CD8-positive, alpha-beta T cell (primary cell): ENCODE measurements at regions of chrX and their contacts with region 1.

Region 1: GRCh38 chrX:11533211-11533651 is 132.5 kb downstream of the ARHGAP6 start:
- DNase-seq: peak in 2 of 9 experiments; percentile 66 to 79
- ATAC-seq: peak; percentile 99
- H3K4me3 ChIP-seq: no peak overlapping the region
- H3K4me3 Mint-ChIP-seq: no peak overlapping the region
- H3K27ac ChIP-seq: no peak overlapping the region
- H3K27ac Mint-ChIP-seq: no peak overlapping the region
- H3K4me1 ChIP-seq: no peaks in the 10 kb centered on the region
- H3K4me1 Mint-ChIP-seq: no peaks in the 10 kb centered on the region
- H3K27me3 ChIP-seq: no peaks in the 10 kb centered on the region
- H3K27me3 Mint-ChIP-seq: no peaks in the 10 kb centered on the region
- CTCF ChIP-seq: peak; percentile 90

Region 2: GRCh38 chrX:9995855-9996339 is 1537.3 kb before region 1 on chrX:
- CTCF ChIA-PET with region 1: no interaction called
- POLR2A ChIA-PET with region 1: no interaction called
- intact Hi-C with region 1: loop called in 1 of 2 experiments (anchors 10 kb)
- DNase-seq: peak; percentile 35 to 87 (median 77)
- ATAC-seq: peak; percentile 84
- H3K4me3 ChIP-seq: no peak overlapping the region
- H3K4me3 Mint-ChIP-seq: no peak overlapping the region
- H3K27ac ChIP-seq: no peak overlapping the region
- H3K27ac Mint-ChIP-seq: no peak overlapping the region
- H3K4me1 ChIP-seq: no peaks in the 10 kb centered on the region
- H3K4me1 Mint-ChIP-seq: no peaks in the 10 kb centered on the region
- H3K27me3 ChIP-seq: no peaks in the 10 kb centered on the region
- H3K27me3 Mint-ChIP-seq: no peaks in the 10 kb centered on the region
- CTCF ChIP-seq: peak; percentile 92

Region 3: DNA sequence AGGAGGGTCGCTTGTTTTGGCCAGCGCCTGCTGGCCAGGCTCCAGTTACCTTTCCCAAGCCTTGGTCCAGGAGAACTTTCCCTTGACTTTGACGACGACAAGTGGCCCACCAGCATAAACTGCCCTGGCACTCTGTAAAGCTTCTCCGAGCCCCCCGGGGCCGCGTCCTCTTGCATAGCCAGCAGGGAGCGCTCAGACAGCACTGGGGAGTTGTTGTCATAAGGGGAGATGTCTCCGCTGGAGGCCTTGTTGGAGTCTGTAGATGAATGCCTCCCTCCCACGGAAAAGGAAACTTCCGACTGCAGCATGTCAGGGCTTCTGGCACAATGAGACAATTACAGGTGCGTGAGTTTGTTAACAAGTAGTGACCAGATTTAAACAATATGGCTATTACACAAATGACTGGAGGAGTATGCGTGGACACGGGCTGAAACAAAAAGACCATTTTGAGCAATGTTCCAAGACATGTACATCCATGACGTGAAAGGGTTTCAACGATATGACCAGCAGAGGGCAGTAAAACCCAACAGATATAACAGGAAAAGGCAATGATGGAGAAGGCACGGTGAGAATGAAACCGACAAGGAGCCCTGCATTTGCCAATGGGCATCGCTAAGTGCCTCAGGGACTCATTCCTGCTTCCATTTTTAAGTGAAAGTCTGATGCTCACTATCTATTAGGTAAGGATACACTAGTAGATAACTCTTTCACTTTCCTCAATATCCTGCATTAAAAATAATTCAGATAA is 389.1 kb before region 1 on chrX:
- CTCF ChIA-PET with region 1: no interaction called
- POLR2A ChIA-PET with region 1: no interaction called
- intact Hi-C with region 1: loop called in 1 of 2 experiments (anchors 10 kb)
- DNase-seq: peak; percentile 3 to 73 (median 36)
- ATAC-seq: peak; percentile 51
- H3K4me3 ChIP-seq: no peak overlapping the region
- H3K4me3 Mint-ChIP-seq: peak overlapping the region; percentile 49
- H3K27ac ChIP-seq: no peak overlapping the region
- H3K27ac Mint-ChIP-seq: no peak overlapping the region
- H3K4me1 ChIP-seq: no peaks in the 10 kb centered on the region
- H3K4me1 Mint-ChIP-seq: peaks cover 3% of the 10 kb centered on the region
- H3K27me3 ChIP-seq: no peaks in the 10 kb centered on the region
- H3K27me3 Mint-ChIP-seq: peaks cover 6% of the 10 kb centered on the region
- CTCF ChIP-seq: peak; percentile 53

Region 4: DNA sequence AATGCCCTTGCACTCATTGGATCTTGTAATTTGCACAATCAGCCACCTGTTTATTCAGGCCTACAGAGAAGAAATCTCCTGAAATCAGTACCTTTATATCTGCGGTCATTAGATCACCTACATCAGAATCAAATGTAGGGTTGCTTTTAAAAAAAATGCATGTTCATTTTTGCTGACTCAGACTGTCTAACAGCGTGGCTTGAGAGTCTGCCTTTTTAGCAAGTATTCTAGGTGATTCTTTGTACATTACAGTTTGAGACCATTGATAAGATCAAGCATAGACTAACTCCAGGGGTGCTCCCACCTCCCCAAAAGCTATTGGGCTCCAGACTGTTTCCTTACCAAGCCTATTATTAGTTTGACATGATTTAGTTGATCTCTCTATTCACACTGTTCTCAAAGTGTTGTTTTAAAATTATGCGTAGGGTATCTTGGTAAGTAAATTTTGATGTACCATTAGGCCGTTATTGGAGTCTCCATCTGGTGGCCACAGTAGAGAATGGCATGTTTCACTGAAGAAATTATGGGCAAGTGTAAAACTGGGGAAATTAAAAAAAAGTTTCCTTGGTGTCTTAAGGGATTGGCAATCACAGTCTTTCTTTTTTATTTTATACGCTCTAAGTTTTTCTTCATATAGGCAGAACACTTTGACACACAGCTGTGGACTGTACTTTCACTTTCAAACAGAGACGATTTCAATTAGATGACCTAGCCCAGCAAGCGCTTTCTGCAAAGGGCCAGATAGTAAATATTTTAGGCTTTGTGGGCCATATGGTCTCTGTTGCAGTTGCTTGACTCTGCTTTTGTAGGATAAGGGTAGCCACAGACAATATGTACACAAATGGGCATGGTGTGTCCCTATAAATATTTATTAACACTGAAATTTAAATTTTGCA is 191.1 kb after region 1 on chrX:
- CTCF ChIA-PET with region 1: interaction called, 4 read pairs
- POLR2A ChIA-PET with region 1: no interaction called
- intact Hi-C with region 1: loop called (anchors 2 kb)
- DNase-seq: peak in 3 of 9 experiments; percentile 8 to 52 (median 37)
- ATAC-seq: no peak
- H3K4me3 ChIP-seq: no peak overlapping the region
- H3K4me3 Mint-ChIP-seq: no peak overlapping the region
- H3K27ac ChIP-seq: no peak overlapping the region
- H3K27ac Mint-ChIP-seq: no peak overlapping the region
- H3K4me1 ChIP-seq: no peaks in the 10 kb centered on the region
- H3K4me1 Mint-ChIP-seq: no peaks in the 10 kb centered on the region
- H3K27me3 ChIP-seq: no peaks in the 10 kb centered on the region
- H3K27me3 Mint-ChIP-seq: peaks cover 5% of the 10 kb centered on the region
- CTCF ChIP-seq: peak; percentile 55

Region 5: GRCh38 chrX:11908371-11908770 is 375.1 kb after region 1 on chrX:
- CTCF ChIA-PET with region 1: no interaction called
- POLR2A ChIA-PET with region 1: no interaction called
- intact Hi-C with region 1: loop called in 1 of 2 experiments (anchors 2 kb)
- DNase-seq: peak in 2 of 9 experiments; percentile 22 to 54
- ATAC-seq: no peak
- H3K4me3 ChIP-seq: no peak overlapping the region
- H3K4me3 Mint-ChIP-seq: no peak overlapping the region
- H3K27ac ChIP-seq: no peak overlapping the region
- H3K27ac Mint-ChIP-seq: no peak overlapping the region
- H3K4me1 ChIP-seq: peaks cover 5% of the 10 kb centered on the region
- H3K4me1 Mint-ChIP-seq: peaks cover 3% of the 10 kb centered on the region
- H3K27me3 ChIP-seq: no peaks in the 10 kb centered on the region
- H3K27me3 Mint-ChIP-seq: peaks cover 2% of the 10 kb centered on the region
- CTCF ChIP-seq: peak; percentile 46

Region 6: DNA sequence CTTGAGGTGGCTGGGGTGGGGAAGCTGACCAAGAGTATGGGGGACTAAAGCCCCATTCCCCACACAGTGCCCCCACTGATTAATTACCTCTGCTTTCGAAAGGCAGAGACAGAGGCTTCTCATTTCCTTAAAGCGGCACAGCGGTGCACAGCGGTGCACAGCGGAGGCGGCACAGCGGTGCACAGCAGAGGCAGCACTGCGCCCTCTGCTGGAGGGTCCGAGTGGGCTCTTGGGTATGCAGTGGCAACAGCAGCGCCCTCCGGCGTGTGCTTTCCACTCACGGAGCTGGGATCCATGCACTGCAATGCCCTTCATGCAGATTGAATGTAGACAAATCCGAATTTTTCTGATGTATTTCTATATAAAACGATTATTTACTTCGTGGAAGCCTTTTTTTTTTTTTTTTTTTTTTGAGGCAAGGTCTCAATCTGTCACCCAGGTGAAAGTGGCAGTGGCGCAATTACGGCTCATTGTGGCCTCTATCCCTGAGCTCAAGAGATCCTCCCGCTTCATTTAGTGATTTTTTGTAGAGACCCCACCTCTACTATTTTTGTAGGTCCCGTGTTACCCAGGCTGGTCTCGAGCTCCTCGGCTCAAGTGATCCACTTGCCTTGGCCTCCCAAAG is 1238.3 kb after region 1 on chrX:
- CTCF ChIA-PET with region 1: interaction called, 3 read pairs
- POLR2A ChIA-PET with region 1: no interaction called
- intact Hi-C with region 1: loop called in 1 of 2 experiments (anchors 1 kb)
- DNase-seq: peak; percentile 34 to 87 (median 68)
- ATAC-seq: peak; percentile 99
- H3K4me3 ChIP-seq: no peak overlapping the region
- H3K4me3 Mint-ChIP-seq: no peak overlapping the region
- H3K27ac ChIP-seq: no peak overlapping the region
- H3K27ac Mint-ChIP-seq: no peak overlapping the region
- H3K4me1 ChIP-seq: peaks cover 5% of the 10 kb centered on the region
- H3K4me1 Mint-ChIP-seq: peaks cover 8% of the 10 kb centered on the region
- H3K27me3 ChIP-seq: no peaks in the 10 kb centered on the region
- H3K27me3 Mint-ChIP-seq: peaks cover 10% of the 10 kb centered on the region
- CTCF ChIP-seq: peak; percentile 78

Region 7: GRCh38 chrX:12894074-12895030 is 1361.1 kb after region 1 on chrX:
- CTCF ChIA-PET with region 1: no interaction called
- POLR2A ChIA-PET with region 1: no interaction called
- intact Hi-C with region 1: loop called in 1 of 2 experiments (anchors 5 kb)
- DNase-seq: peak; percentile 4 to 64 (median 40)
- ATAC-seq: peak; percentile 49
- H3K4me3 ChIP-seq: no peak overlapping the region
- H3K4me3 Mint-ChIP-seq: no peak overlapping the region
- H3K27ac ChIP-seq: no peak overlapping the region
- H3K27ac Mint-ChIP-seq: peak overlapping the region; percentile 24
- H3K4me1 ChIP-seq: peaks cover 3% of the 10 kb centered on the region
- H3K4me1 Mint-ChIP-seq: peaks cover 25% of the 10 kb centered on the region
- H3K27me3 ChIP-seq: no peaks in the 10 kb centered on the region
- H3K27me3 Mint-ChIP-seq: no peaks in the 10 kb centered on the region
- CTCF ChIP-seq: peak; percentile 56